MCF 10A (cell line): ENCODE measurements at regions of chr3 and their contacts with region 1.

Region 1: GRCh38 chr3:172710664-172711453 is at the start of gene NCEH1:
- DNase-seq: peak; percentile 97
- H3K4me3 Mint-ChIP-seq: peak within 1 kb of the TSS; percentile 94
- H3K27ac Mint-ChIP-seq: peak within 1 kb of the TSS; percentile 84
- H3K4me1 Mint-ChIP-seq: peaks cover 8% of the 10 kb centered on the region
- H3K27me3 Mint-ChIP-seq: no peaks in the 10 kb centered on the region
- CTCF ChIP-seq: peak; percentile 74
- total RNA-seq, gene NCEH1: 27.8 and 28.8 TPM in 2 replicates

Region 2: GRCh38 chr3:172616031-172616461 is 94.8 kb before region 1 on chr3:
- CTCF ChIA-PET with region 1: no interaction called
- POLR2A ChIA-PET with region 1: no interaction called
- intact Hi-C with region 1: no loop called
- DNase-seq: no peak
- H3K4me3 Mint-ChIP-seq: no peak overlapping the region
- H3K27ac Mint-ChIP-seq: no peak overlapping the region
- H3K4me1 Mint-ChIP-seq: peaks cover 10% of the 10 kb centered on the region
- H3K27me3 Mint-ChIP-seq: no peaks in the 10 kb centered on the region
- CTCF ChIP-seq: no peak

Region 3: DNA sequence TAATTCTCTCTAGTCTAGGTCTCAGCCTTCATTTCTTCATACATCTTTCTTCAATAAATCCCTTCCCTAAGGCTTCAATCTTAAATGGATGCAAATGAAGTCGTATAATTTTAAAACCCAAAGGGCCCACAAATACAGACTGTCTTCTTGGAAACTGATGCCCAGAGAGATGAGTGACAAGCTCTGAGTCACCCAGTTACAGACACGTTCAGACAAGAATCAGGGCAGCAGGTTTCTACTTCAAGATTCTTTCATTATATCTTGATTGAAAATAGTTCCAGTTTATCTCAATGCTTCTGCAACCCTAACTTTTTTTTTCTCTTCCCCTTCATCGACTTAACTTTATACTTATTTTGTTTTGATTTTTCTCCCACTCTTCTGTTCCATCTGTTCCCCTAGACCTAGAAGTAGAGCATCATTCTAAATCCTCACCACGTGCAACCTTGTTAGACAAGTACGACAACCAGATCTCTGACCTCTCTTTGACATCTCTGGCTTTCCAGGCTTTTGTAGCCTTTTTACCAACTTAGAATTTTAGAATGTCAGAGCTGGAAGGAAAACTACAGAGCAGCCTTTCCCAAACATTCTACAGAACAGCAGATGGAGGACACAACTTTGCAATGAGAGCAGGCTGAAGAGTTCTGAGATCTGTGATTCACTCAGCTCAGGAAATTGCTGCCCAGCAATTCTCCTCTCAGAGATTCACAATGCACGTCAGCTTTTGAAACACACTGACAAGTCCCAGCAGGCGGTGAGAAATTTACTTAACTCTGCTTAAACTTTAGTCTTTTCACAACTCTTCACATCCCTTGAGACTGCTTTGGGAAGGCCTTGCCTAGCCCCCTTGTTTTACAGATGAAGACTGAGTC is 25.3 kb before region 1 on chr3:
- CTCF ChIA-PET with region 1: interaction called, 39 read pairs
- POLR2A ChIA-PET with region 1: interaction called, 62 read pairs
- intact Hi-C with region 1: loop called (anchors 1 kb)
- DNase-seq: peak; percentile 85
- H3K4me3 Mint-ChIP-seq: peak overlapping the region; percentile 51
- H3K27ac Mint-ChIP-seq: peak overlapping the region; percentile 74
- H3K4me1 Mint-ChIP-seq: peaks cover 38% of the 10 kb centered on the region
- H3K27me3 Mint-ChIP-seq: no peaks in the 10 kb centered on the region
- CTCF ChIP-seq: no peak

Region 4: GRCh38 chr3:172692751-172693338 is 18.0 kb before region 1 on chr3:
- CTCF ChIA-PET with region 1: interaction called, 39 read pairs
- POLR2A ChIA-PET with region 1: interaction called, 62 read pairs
- intact Hi-C with region 1: no loop called
- DNase-seq: no peak
- H3K4me3 Mint-ChIP-seq: no peak overlapping the region
- H3K27ac Mint-ChIP-seq: no peak overlapping the region
- H3K4me1 Mint-ChIP-seq: peaks cover 7% of the 10 kb centered on the region
- H3K27me3 Mint-ChIP-seq: no peaks in the 10 kb centered on the region
- CTCF ChIP-seq: no peak

Region 5: DNA sequence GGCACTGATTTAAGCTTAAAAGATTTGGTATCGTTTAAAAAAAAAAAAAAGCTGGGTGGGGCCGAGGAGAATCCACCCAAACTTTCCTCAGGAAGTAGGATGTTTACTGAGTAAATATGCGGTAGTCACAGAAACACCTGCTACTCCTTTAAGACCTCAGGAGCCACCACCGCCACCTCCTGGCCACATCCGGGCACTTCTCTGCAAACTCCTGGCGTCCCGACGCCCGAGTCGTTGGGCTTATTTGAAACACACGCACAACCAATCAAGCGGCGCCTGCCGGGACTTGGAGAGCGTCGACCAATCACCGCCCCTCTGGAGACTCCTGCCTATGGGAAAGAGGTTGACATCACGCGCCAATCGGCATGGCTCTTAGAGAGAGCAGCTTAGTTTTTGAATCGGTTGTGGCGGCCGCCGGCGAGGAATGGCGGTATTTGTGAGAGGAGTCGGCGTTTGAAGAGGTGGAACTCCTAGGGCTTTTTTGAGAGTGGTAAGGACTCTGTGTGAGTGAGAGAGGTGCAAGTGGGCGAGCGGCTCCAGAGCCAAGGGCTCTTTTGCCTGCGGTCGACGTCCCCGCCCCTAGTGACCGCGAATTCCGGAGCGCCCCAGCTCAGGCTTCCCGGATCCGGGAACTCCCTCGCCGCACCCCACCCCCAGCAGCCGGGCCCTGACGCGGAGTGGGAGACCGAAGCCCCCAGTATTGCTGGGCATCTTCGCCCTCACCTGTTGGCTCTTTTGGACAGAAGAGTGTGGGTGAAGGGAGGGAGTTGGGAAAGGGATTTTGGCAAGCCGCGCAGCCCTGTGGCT is 39.7 kb after region 1 on chr3 and contains the start of gene ECT2:
- CTCF ChIA-PET with region 1: interaction called, 71 read pairs
- POLR2A ChIA-PET with region 1: interaction called, 89 read pairs
- intact Hi-C with region 1: loop called (anchors 1 kb)
- DNase-seq: peak; percentile 100
- H3K4me3 Mint-ChIP-seq: peak within 1 kb of the TSS; percentile 78
- H3K27ac Mint-ChIP-seq: peak within 1 kb of the TSS; percentile 89
- H3K4me1 Mint-ChIP-seq: peaks cover 49% of the 10 kb centered on the region
- H3K27me3 Mint-ChIP-seq: no peaks in the 10 kb centered on the region
- CTCF ChIP-seq: peak; percentile 59
- total RNA-seq, gene ECT2: 54.8 and 63.9 TPM in 2 replicates

Region 6: GRCh38 chr3:172771672-172772071 is 60.8 kb after region 1 on chr3:
- CTCF ChIA-PET with region 1: no interaction called
- POLR2A ChIA-PET with region 1: no interaction called
- intact Hi-C with region 1: no loop called
- DNase-seq: no peak
- H3K4me3 Mint-ChIP-seq: no peak overlapping the region
- H3K27ac Mint-ChIP-seq: no peak overlapping the region
- H3K4me1 Mint-ChIP-seq: no peaks in the 10 kb centered on the region
- H3K27me3 Mint-ChIP-seq: no peaks in the 10 kb centered on the region
- CTCF ChIP-seq: no peak

Region 7: DNA sequence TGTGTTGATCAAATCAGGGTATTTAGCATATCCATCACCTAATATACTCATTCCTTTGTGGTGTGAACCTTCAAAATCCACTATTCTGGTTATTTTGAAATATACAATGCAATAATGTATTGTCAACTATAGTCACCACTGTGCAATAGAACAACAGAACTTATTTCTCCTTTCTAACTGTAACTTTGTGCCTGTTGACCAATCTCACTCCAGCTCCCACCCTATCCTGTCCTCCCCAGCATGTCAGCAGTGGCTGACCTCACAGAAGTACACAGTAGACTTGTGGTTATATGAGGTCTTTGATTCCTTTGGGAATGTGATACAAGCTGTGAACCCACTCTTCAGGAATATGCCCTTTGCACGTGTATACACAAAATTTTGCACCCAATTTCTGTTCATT is 103.9 kb after region 1 on chr3:
- CTCF ChIA-PET with region 1: no interaction called
- POLR2A ChIA-PET with region 1: no interaction called
- intact Hi-C with region 1: no loop called
- DNase-seq: no peak
- H3K4me3 Mint-ChIP-seq: no peak overlapping the region
- H3K27ac Mint-ChIP-seq: no peak overlapping the region
- H3K4me1 Mint-ChIP-seq: no peaks in the 10 kb centered on the region
- H3K27me3 Mint-ChIP-seq: no peaks in the 10 kb centered on the region
- CTCF ChIP-seq: no peak